Activated B cell treated with CpG ODN at 0.5 μM for 24 hours (primary cell): ENCODE measurements at regions of chr3 and their contacts with region 1.

Region 1: DNA sequence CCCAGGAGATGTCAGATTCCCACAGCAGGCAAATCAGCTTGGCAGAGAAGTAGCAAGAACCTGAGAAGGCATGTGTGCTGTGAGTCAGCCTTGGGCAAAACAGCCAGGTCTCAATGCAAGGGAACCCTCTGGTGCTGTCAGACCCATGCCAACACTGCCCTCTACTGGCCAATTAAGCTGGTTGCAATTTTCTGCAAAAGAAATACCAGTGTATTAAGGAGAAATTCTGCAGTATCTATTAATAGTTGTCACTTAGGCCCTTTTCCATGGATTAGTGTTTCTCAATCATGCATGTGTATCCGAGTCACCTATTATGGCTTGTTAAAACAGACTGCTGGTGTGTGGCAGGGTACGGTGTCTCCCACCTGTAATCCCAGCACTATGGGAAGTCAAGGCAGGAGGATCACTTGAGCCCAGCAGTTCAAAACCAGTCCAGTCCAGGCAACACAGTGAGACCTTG is 26.2 kb downstream of the MAP4 start:
- DNase-seq: peak; percentile 19
- ATAC-seq: peak; percentile 95
- H3K4me3 Mint-ChIP-seq: no peak overlapping the region
- H3K27ac Mint-ChIP-seq: no peak overlapping the region
- H3K4me1 Mint-ChIP-seq: peaks cover 10% of the 10 kb centered on the region
- H3K27me3 Mint-ChIP-seq: no peaks in the 10 kb centered on the region
- CTCF ChIP-seq: peak; percentile 66

Region 2: GRCh38 chr3:47522082-47522987 is 467.7 kb before region 1 on chr3:
- CTCF ChIA-PET with region 1: interaction called, 13 read pairs
- POLR2A ChIA-PET with region 1: no interaction called
- intact Hi-C with region 1: loop called (anchors 1 kb)
- DNase-seq: peak; percentile 55
- ATAC-seq: peak; percentile 95
- H3K4me3 Mint-ChIP-seq: no peak overlapping the region
- H3K27ac Mint-ChIP-seq: no peak overlapping the region
- H3K4me1 Mint-ChIP-seq: peaks cover 8% of the 10 kb centered on the region
- H3K27me3 Mint-ChIP-seq: no peaks in the 10 kb centered on the region
- CTCF ChIP-seq: peak; percentile 20

Region 3: DNA sequence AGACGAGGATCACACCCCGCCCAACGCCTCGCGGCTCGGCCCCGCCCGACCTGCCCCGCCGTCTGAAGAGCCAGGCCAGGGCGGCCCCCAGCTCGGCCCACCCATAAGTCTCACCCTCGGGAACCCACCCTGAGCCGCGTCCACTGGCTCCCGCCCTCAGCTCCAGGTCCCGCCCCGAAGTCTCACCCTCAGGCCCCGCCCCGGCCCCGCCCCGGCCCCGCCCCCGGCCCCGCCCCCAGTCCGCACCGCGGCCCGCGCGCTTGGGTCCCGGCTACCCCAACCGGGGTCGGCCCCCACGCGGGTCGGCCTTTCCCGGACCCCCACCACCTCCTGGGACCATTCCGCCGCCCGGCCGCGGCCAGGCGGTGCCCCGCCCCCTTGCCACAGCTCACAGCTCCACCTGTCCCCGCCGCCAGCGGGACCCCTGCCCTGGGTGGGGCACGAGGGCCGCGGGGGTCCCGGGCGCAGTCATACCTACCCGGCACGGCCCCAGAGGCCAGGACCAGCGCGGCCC is 411.8 kb before region 1 on chr3:
- CTCF ChIA-PET with region 1: no interaction called
- POLR2A ChIA-PET with region 1: no interaction called
- intact Hi-C with region 1: no loop called
- DNase-seq: peak; percentile 51
- ATAC-seq: peak; percentile 83
- H3K4me3 Mint-ChIP-seq: peak overlapping the region; percentile 73
- H3K27ac Mint-ChIP-seq: no peak overlapping the region
- H3K4me1 Mint-ChIP-seq: peaks cover 2% of the 10 kb centered on the region
- H3K27me3 Mint-ChIP-seq: peaks cover 24% of the 10 kb centered on the region
- CTCF ChIP-seq: no peak

Region 4: DNA sequence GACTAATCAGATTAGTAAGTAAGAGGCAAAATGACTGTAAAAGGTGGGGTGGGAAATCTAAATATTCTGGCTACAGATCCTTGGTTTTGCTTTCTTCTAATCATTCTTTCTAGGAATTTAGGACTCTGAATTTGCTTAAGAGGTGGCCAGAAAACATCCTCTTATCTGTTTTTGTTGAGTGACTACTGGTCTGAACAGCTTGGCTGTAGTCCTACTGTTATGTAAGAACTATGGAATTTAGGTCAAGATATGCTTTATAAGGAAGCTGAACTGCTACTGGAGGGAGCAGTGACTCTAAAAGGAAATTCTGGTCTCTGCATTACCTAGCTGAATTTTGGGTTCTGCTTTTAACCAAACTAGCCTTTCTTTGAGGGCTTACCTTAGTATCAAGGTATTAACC is 377.8 kb before region 1 on chr3:
- CTCF ChIA-PET with region 1: no interaction called
- POLR2A ChIA-PET with region 1: no interaction called
- intact Hi-C with region 1: no loop called
- DNase-seq: no peak
- ATAC-seq: no peak
- H3K4me3 Mint-ChIP-seq: no peak overlapping the region
- H3K27ac Mint-ChIP-seq: no peak overlapping the region
- H3K4me1 Mint-ChIP-seq: peaks cover 1% of the 10 kb centered on the region
- H3K27me3 Mint-ChIP-seq: no peaks in the 10 kb centered on the region
- CTCF ChIP-seq: no peak

Region 5: GRCh38 chr3:47824541-47825473 is 165.2 kb before region 1 on chr3:
- CTCF ChIA-PET with region 1: interaction called, 27 read pairs
- POLR2A ChIA-PET with region 1: interaction called, 4 read pairs
- intact Hi-C with region 1: loop called (anchors 1 kb)
- DNase-seq: peak; percentile 79
- ATAC-seq: peak; percentile 98
- H3K4me3 Mint-ChIP-seq: peak overlapping the region; percentile 88
- H3K27ac Mint-ChIP-seq: peak overlapping the region; percentile 73
- H3K4me1 Mint-ChIP-seq: peaks cover 38% of the 10 kb centered on the region
- H3K27me3 Mint-ChIP-seq: no peaks in the 10 kb centered on the region
- CTCF ChIP-seq: peak; percentile 39

Region 6: GRCh38 chr3:47836986-47837385 is 153.0 kb before region 1 on chr3:
- CTCF ChIA-PET with region 1: interaction called, 47 read pairs
- POLR2A ChIA-PET with region 1: no interaction called
- intact Hi-C with region 1: loop called (anchors 1 kb)
- DNase-seq: no peak
- ATAC-seq: no peak
- H3K4me3 Mint-ChIP-seq: no peak overlapping the region
- H3K27ac Mint-ChIP-seq: no peak overlapping the region
- H3K4me1 Mint-ChIP-seq: peaks cover 3% of the 10 kb centered on the region
- H3K27me3 Mint-ChIP-seq: no peaks in the 10 kb centered on the region
- CTCF ChIP-seq: no peak

Region 7: DNA sequence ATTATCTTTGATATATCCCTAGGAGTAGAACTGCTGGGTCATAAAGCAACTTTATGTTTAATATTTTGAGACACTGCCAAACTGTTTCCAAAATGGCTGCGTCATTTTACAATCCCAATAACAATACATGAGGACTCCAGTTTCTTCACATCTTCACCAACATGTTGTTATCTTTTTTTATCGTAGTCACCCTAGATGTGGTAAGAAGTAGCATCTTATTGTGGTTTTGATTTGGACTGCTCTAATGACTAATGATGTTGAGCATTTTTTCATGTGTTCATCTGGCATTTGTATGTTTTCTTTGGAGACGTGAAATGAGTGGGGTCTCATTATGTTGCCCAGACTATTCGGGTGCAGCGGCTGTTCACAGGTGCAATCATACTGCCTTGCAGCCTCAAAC is 57.6 kb before region 1 on chr3:
- CTCF ChIA-PET with region 1: interaction called, 7 read pairs
- POLR2A ChIA-PET with region 1: no interaction called
- intact Hi-C with region 1: loop called (anchors 10 kb)
- DNase-seq: no peak
- ATAC-seq: no peak
- H3K4me3 Mint-ChIP-seq: no peak overlapping the region
- H3K27ac Mint-ChIP-seq: no peak overlapping the region
- H3K4me1 Mint-ChIP-seq: no peaks in the 10 kb centered on the region
- H3K27me3 Mint-ChIP-seq: no peaks in the 10 kb centered on the region
- CTCF ChIP-seq: no peak

Region 8: GRCh38 chr3:47976135-47976732 is 13.8 kb before region 1 on chr3:
- CTCF ChIA-PET with region 1: interaction called, 10 read pairs
- POLR2A ChIA-PET with region 1: no interaction called
- intact Hi-C with region 1: no loop called
- DNase-seq: no peak
- ATAC-seq: peak; percentile 79
- H3K4me3 Mint-ChIP-seq: peak overlapping the region; percentile 47
- H3K27ac Mint-ChIP-seq: peak overlapping the region; percentile 65
- H3K4me1 Mint-ChIP-seq: peaks cover 35% of the 10 kb centered on the region
- H3K27me3 Mint-ChIP-seq: no peaks in the 10 kb centered on the region
- CTCF ChIP-seq: no peak

Region 9: GRCh38 chr3:48151058-48151806 is 161.2 kb after region 1 on chr3:
- CTCF ChIA-PET with region 1: interaction called, 12 read pairs
- POLR2A ChIA-PET with region 1: no interaction called
- intact Hi-C with region 1: loop called (anchors 1 kb)
- DNase-seq: peak; percentile 30
- ATAC-seq: peak; percentile 89
- H3K4me3 Mint-ChIP-seq: no peak overlapping the region
- H3K27ac Mint-ChIP-seq: no peak overlapping the region
- H3K4me1 Mint-ChIP-seq: no peaks in the 10 kb centered on the region
- H3K27me3 Mint-ChIP-seq: no peaks in the 10 kb centered on the region
- CTCF ChIP-seq: no peak